ENCODE measurements at regions of chr12 and their contacts with region 1.

Region 1: GRCh38 chr12:93121729-93122488 is 192.8 kb upstream of the EEA1 start:
- DNase-seq: peak; percentile 48
- H3K4me3 Mint-ChIP-seq: peak overlapping the region; percentile 24
- H3K27ac Mint-ChIP-seq: peak overlapping the region; percentile 94
- H3K4me1 Mint-ChIP-seq: peaks cover 27% of the 10 kb centered on the region
- H3K27me3 Mint-ChIP-seq: no peaks in the 10 kb centered on the region
- CTCF ChIP-seq: no peak

Region 2: DNA sequence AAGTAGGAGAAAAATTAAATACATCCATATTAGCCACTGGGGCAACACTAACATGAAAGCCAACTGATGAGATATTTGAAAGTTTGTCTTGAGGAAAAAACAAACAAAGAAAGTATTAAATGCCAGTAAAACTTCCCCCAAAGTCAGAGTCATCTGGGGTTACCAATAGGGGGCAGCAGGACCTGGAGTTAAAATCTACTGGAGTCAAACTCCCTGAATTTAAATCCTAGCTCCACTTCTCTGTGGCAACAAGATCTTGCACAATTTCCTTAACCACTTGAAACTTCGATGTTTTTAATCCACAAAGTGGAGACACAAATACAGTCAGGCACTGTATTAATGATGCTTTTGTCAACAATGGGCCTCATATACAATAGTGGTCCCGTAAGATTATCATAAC is 404.7 kb before region 1 on chr12:
- CTCF ChIA-PET with region 1: no interaction called
- POLR2A ChIA-PET with region 1: no interaction called
- intact Hi-C with region 1: no loop called
- DNase-seq: peak; percentile 75
- H3K4me3 Mint-ChIP-seq: no peak overlapping the region
- H3K27ac Mint-ChIP-seq: no peak overlapping the region
- H3K4me1 Mint-ChIP-seq: peaks cover 6% of the 10 kb centered on the region
- H3K27me3 Mint-ChIP-seq: no peaks in the 10 kb centered on the region
- CTCF ChIP-seq: peak; percentile 9

Region 3: DNA sequence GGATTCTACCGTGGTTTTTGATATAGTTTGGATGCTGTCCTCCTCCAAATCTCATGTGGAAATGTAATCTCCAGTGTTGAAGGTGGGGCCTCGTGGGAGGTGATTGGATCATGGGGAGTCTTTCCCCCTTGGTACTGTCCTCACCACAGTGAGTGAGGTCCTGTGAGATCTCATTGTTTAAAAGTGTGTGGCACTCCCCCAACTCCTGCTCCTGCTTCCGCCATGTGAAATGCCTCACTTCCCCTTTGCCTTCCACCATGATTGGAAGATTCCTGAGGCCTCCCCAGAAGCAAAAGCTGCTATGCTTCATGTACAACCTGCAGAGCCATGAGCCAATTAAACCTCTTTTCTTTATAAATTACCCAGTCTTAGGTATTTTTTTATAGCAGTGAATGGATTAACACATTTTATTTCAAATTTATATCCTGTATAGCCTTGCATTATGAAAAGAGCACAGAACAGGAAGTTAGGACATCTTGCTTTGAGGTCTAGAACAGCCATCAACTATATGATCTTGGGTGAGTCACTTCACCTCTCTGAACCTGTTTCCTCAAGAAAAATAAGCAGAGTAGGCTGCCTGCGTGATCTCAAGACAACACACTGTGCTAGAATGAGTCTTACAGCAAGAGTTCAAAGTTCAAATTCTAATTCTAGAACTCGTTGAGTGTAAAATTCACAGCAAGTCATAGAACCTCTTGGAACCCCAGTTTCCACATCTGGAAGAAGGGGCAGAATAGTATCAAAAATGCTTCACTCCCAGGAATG is 31.9 kb before region 1 on chr12:
- CTCF ChIA-PET with region 1: interaction called, 7 read pairs
- POLR2A ChIA-PET with region 1: interaction called, 29 read pairs
- intact Hi-C with region 1: no loop called
- DNase-seq: peak; percentile 88
- H3K4me3 Mint-ChIP-seq: no peak overlapping the region
- H3K27ac Mint-ChIP-seq: peak overlapping the region; percentile 88
- H3K4me1 Mint-ChIP-seq: peaks cover 31% of the 10 kb centered on the region
- H3K27me3 Mint-ChIP-seq: no peaks in the 10 kb centered on the region
- CTCF ChIP-seq: no peak

Region 4: GRCh38 chr12:93098077-93098476 is 23.8 kb before region 1 on chr12:
- CTCF ChIA-PET with region 1: interaction called, 7 read pairs
- POLR2A ChIA-PET with region 1: interaction called, 26 read pairs
- intact Hi-C with region 1: no loop called
- DNase-seq: peak; percentile 59
- H3K4me3 Mint-ChIP-seq: no peak overlapping the region
- H3K27ac Mint-ChIP-seq: no peak overlapping the region
- H3K4me1 Mint-ChIP-seq: no peaks in the 10 kb centered on the region
- H3K27me3 Mint-ChIP-seq: no peaks in the 10 kb centered on the region
- CTCF ChIP-seq: peak; percentile 28

Region 5: GRCh38 chr12:93108985-93109384 is 12.9 kb before region 1 on chr12:
- CTCF ChIA-PET with region 1: interaction called, 5 read pairs
- POLR2A ChIA-PET with region 1: interaction called, 15 read pairs
- intact Hi-C with region 1: no loop called
- DNase-seq: no peak
- H3K4me3 Mint-ChIP-seq: no peak overlapping the region
- H3K27ac Mint-ChIP-seq: no peak overlapping the region
- H3K4me1 Mint-ChIP-seq: peaks cover 12% of the 10 kb centered on the region
- H3K27me3 Mint-ChIP-seq: no peaks in the 10 kb centered on the region
- CTCF ChIP-seq: no peak

Region 6: DNA sequence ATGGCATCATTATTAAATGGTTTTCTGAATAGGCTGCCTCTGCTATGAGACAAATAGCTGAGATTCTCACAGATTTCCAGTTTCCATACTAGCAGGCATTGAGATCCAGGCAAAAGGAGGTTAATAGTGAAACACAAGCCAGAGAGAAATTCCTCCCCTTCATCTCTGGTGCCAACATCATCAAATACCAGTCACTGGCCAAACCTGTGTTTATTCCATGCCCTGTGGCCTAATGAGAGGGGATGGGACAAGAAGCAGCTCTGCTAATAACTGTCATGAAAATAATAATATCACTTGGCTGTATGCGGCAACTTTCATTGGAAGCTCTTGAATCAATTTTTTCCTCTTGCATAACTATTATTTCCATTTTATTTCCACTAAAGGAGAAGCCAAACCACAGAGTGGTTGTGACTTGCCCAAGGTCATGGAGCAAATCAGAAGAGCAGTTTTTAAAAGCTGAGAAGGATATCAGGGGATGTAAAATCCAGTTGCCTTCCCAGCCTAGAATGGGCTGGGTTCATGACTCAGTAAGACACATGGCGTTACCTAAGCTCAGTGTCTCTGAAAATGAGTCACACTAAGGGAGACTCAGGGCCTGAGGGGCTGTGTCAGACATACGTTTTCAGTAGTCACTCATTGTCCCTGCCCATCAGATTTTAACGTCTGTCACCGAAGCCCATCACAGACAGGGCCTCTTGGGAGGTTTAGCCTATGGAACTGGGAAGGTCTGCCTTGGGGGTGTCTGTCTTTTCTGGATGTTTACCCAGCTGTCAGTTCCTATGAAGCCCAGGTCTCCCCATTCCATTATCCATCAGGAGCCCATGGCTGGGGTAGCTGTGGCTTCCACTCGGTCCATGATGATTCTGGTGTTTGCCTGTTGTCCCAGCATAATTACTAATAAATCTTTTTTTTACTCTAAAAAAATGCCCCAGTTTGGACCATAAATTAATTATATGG is 16.0 kb after region 1 on chr12:
- CTCF ChIA-PET with region 1: interaction called, 8 read pairs
- POLR2A ChIA-PET with region 1: interaction called, 45 read pairs
- intact Hi-C with region 1: no loop called
- DNase-seq: peak; percentile 96
- H3K4me3 Mint-ChIP-seq: peak overlapping the region; percentile 4
- H3K27ac Mint-ChIP-seq: peak overlapping the region; percentile 78
- H3K4me1 Mint-ChIP-seq: peaks cover 47% of the 10 kb centered on the region
- H3K27me3 Mint-ChIP-seq: no peaks in the 10 kb centered on the region
- CTCF ChIP-seq: no peak

Region 7: GRCh38 chr12:93243689-93244513 is 122.0 kb after region 1 on chr12:
- CTCF ChIA-PET with region 1: interaction called, 6 read pairs
- POLR2A ChIA-PET with region 1: interaction called, 11 read pairs
- intact Hi-C with region 1: loop called (anchors 5 kb)
- DNase-seq: peak; percentile 91
- H3K4me3 Mint-ChIP-seq: peak overlapping the region; percentile 56
- H3K27ac Mint-ChIP-seq: peak overlapping the region; percentile 69
- H3K4me1 Mint-ChIP-seq: peaks cover 25% of the 10 kb centered on the region
- H3K27me3 Mint-ChIP-seq: no peaks in the 10 kb centered on the region
- CTCF ChIP-seq: no peak

Region 8: GRCh38 chr12:93638095-93638494 is 516.2 kb after region 1 on chr12:
- CTCF ChIA-PET with region 1: no interaction called
- POLR2A ChIA-PET with region 1: no interaction called
- intact Hi-C with region 1: no loop called
- DNase-seq: no peak
- H3K4me3 Mint-ChIP-seq: no peak overlapping the region
- H3K27ac Mint-ChIP-seq: no peak overlapping the region
- H3K4me1 Mint-ChIP-seq: no peaks in the 10 kb centered on the region
- H3K27me3 Mint-ChIP-seq: peaks cover 22% of the 10 kb centered on the region
- CTCF ChIP-seq: no peak